ENCODE measurements at regions of chr1 and their contacts with region 1.

Region 1: DNA sequence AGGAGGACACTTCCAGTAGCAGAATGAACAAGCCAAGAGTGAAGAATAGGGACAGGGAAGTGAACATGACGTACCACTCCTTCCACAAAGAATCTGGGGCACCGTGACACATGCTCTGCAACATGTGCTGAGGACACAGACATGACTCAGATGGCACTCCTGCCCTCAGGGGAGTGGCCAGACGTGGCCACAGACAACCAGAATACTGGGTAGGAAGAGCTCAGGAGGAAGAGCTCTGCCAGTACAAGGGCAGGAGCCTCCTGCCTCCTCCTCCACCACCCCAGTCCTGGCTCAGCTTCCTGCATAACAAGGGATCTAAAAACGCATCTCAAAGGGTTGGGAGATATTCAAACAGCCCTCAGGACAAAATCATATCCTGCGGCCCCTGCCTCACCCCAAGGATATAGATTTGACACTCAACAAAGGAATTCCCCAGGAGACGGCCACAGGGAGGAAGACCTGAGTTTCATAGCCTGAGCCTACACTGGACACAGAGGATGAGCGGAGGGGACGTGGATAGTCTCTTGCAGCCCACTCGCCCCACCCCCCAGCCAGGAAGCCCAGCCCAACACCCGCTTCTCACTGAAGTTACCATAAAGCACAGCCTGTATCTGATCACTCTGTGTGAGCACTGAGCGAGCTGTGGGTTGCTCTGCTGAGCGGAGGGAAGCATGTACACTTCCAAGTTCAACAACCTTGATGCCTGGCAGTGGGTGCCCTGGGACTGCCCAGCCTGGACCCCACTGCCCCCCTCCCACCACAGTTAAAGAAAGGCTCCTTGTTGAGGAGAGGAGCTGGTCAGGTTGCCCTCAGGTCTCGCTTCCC is 102.3 kb downstream of the TRABD2B start:
- DNase-seq: peak; percentile 4
- ATAC-seq: no peak
- H3K4me3 ChIP-seq: no peak overlapping the region
- H3K27ac ChIP-seq: no peak overlapping the region
- H3K4me1 ChIP-seq: no peaks in the 10 kb centered on the region
- H3K27me3 ChIP-seq: 0 out of 2 replicates have a peak, but pooled peaks cover 2% of the 10 kb centered on the region
- CTCF ChIP-seq: no peak
- POLR2A ChIP-seq: no peak
- RAD21 ChIP-seq: no peak

Region 2: DNA sequence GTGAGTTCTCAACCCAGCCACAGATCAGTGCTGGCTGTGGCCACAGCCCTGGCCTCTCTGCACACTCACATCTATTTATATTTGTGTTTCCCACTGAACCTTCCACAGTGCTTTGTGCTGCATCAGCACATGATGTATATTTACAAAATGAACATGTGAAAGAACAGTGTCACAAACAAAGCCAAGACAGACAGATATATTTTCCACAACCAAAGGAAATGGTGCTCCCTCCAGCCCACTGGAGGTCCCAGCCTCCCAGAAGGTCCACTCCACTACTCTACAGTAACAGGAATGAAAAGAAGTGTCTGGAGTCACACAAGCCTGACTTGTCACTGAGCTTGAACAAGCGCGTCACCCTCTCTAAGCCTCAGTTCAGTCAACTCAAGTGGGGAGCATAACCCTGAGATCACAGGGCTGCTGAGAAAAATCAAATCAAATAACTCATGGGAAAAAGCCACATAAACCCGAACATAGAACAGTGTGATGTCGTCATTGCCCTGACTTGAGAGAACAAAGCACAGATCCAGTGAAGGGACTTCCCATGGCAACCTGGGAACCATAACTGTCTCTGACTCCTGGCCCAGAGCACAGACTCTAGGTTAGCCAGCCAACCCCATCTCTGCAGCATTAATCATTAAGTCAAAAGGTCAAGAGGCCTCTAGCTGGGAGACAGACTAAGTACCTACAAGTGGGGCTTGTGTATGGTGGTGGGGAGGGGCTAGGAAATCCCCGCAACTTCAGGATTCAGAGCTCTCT is 18.9 kb before region 1 on chr1:
- CTCF ChIA-PET with region 1: no interaction called
- POLR2A ChIA-PET with region 1: no interaction called
- dilution Hi-C with region 1: no loop called
- in situ Hi-C with region 1: no loop called
- intact Hi-C with region 1: loop called (anchors 1 kb)
- DNase-seq: no peak
- ATAC-seq: no peak
- H3K4me3 ChIP-seq: no peak overlapping the region
- H3K27ac ChIP-seq: no peak overlapping the region
- H3K4me1 ChIP-seq: no peaks in the 10 kb centered on the region
- H3K27me3 ChIP-seq: no peaks in the 10 kb centered on the region
- CTCF ChIP-seq: no peak
- POLR2A ChIP-seq: no peak
- RAD21 ChIP-seq: no peak

Region 3: DNA sequence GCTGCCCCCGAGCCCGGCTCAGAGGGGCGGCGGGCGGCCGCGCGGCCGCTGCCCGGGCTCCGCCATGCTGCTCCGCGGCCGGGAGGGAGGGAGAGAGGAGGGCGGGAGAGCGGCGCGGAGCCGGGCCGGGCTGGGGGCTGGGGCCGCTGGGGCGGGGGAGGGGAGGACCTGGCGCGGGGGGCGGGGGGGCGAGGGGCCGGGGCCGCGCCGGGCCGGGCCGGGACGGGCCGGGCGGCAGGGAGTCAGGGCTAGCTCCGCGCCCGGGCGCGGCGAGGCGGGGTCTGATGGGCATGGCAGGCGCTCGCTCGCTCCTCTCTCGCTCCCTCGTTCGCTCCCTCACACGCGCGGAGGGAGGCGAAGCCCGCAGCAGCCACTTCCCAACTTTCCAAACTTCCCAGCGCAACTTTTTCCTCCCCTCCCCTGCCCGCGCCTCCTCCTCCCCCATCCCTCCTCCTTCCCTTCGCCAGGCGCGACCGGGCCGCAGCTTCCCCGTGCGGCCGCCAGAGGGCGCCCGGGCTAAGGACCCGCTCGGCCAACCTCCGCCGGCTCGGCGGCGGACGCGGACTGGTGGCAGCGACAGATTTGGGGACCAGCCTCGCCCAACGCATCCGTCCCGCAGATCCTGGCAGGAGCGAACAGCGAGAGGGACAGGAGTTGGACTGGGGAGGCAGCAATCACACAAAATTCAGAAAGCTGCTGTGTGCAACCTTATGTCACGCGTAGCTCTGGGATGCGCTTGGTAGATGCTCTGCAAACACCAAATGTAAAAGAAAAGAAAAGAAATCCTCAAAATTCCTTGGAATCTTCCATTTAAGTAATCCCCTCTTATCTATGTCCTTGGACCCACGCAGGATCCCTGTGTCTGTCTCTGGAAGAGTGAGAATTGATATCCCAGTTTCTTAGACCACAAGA is 102.6 kb after region 1 on chr1 and contains the start of gene TRABD2B:
- CTCF ChIA-PET with region 1: no interaction called
- POLR2A ChIA-PET with region 1: no interaction called
- dilution Hi-C with region 1: no loop called
- in situ Hi-C with region 1: no loop called
- intact Hi-C with region 1: no loop called
- DNase-seq: peak; percentile 34
- ATAC-seq: peak; percentile 99
- H3K4me3 ChIP-seq: peak within 1 kb of the TSS; percentile 49
- H3K27ac ChIP-seq: no peak within 1 kb of the TSS
- H3K4me1 ChIP-seq: no peaks in the 10 kb centered on the region
- H3K27me3 ChIP-seq: peaks cover 35% of the 10 kb centered on the region
- CTCF ChIP-seq: peak; percentile 87
- POLR2A ChIP-seq: no peak
- RAD21 ChIP-seq: peak; percentile 53
- total RNA-seq, gene TRABD2B: not detected in 2 replicates